Posterior vena cava (tissue), 2 donors: ENCODE measurements at regions of chr13 and their contacts with region 1.

Region 1: GRCh38 chr13:43963726-43964125 is 84.0 kb downstream of the LACC1 start:
- DNase-seq: no peak

Region 2: GRCh38 chr13:42929886-42930535 is 1033.7 kb before region 1 on chr13:
- intact Hi-C with region 1: no loop called
- DNase-seq: no peak

Region 3: DNA sequence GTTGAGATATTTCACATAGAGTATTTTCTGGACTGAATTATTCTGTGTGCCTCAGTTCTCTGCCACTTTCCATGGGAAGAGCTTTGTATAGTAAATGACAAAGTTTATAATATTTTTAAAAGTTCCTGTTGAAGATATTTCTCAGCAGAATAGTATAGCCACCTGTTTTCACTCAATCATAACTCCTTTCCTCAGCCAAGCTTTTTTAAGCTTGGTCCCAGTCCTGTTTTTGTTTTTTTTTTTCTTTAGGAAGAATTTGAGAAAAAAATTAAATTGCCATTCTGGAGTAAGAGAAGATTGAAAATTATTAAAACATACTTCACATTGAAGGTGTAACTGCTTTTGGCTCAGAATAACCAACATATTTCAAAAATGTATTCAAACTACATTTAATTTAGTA is 232.4 kb before region 1 on chr13:
- intact Hi-C with region 1: no loop called
- DNase-seq: no peak

Region 4: DNA sequence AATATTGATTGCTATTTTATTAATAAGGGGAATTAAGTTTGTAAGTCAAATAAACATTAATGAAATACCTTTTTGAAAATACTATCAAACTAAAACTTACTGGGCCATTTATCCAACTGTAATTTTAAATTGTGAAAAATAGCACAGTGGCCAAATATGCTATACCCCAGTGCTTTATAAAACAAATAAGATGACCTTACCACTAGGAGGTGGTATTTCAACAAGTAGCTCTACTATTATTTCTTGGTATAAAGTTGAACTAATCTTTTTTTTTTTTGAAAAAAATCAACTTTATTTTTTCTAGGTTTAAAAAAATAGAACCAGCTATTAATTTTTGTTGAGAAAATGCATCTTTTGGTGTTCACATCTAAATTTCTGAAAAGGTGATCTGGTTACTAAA is 69.3 kb before region 1 on chr13:
- intact Hi-C with region 1: loop called in 1 of 2 experiments (anchors 2 kb)
- DNase-seq: no peak

Region 5: GRCh38 chr13:43981091-43981490 is 17.4 kb after region 1 on chr13:
- intact Hi-C with region 1: no loop called
- DNase-seq: no peak